ENCODE measurements at regions of chr4 and their contacts with region 1.

Region 1: DNA sequence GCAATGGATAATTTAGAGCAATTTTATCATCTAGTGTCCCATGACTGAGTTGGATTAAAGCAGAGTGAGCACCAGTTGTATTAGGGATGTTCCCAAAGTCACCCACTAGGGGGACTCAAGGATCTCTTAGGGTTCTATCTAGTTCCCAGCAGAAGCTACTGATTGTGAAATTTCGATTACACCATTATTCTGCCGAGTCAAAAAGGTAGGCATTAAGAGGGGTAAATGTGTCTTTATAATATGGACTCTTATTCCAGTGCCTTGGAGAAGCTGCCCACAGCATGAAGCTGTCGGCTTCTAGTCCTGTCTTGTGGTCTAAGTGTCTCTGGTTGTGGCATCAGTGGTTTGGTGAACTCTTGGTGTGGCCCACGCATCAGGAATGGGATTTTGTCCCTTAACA is 53.3 kb downstream of the RGS12 start:
- DNase-seq: peak; percentile 83
- H3K4me3 Mint-ChIP-seq: no peak overlapping the region
- H3K27ac Mint-ChIP-seq: no peak overlapping the region
- H3K4me1 Mint-ChIP-seq: peaks cover 8% of the 10 kb centered on the region
- H3K27me3 Mint-ChIP-seq: peaks cover 6% of the 10 kb centered on the region

Region 2: GRCh38 chr4:3442959-3443749 is 97.0 kb after region 1 on chr4:
- intact Hi-C with region 1: loop called (anchors 1 kb)
- DNase-seq: peak; percentile 92
- H3K4me3 Mint-ChIP-seq: no peak overlapping the region
- H3K27ac Mint-ChIP-seq: no peak overlapping the region
- H3K4me1 Mint-ChIP-seq: no peaks in the 10 kb centered on the region
- H3K27me3 Mint-ChIP-seq: no peaks in the 10 kb centered on the region

Region 3: GRCh38 chr4:3480528-3481112 is 134.5 kb after region 1 on chr4:
- intact Hi-C with region 1: loop called (anchors 2 kb)
- DNase-seq: peak; percentile 94
- H3K4me3 Mint-ChIP-seq: no peak overlapping the region
- H3K27ac Mint-ChIP-seq: no peak overlapping the region
- H3K4me1 Mint-ChIP-seq: no peaks in the 10 kb centered on the region
- H3K27me3 Mint-ChIP-seq: peaks cover 14% of the 10 kb centered on the region

Region 4: DNA sequence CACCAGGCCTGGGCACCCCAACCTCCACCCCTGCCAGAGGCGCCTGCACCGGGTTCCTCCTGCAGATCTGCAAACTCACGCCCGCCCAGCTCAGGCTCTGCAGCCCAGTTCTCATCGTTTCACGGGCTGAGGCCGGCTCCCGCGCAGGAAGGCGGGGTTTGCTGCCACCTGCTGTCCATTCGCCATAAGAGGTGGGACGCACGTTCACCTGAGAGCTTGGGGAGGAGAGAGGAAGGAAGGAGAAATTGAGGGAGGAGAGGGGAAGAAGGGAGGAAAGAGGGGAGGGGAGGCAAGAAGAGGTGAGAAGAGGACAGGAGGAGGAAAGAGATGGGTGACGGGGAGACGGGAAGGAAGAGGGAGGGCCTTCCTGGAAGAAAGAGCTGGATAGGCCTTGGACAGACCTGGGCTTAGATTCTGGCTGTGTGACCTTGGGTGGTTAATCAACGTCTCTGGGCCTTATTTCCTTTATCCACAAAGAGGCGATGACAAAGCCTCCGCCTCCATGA is 534.5 kb after region 1 on chr4:
- intact Hi-C with region 1: loop called (anchors 10 kb)
- DNase-seq: peak; percentile 89
- H3K4me3 Mint-ChIP-seq: no peak overlapping the region
- H3K27ac Mint-ChIP-seq: no peak overlapping the region
- H3K4me1 Mint-ChIP-seq: peaks cover 4% of the 10 kb centered on the region
- H3K27me3 Mint-ChIP-seq: peaks cover 37% of the 10 kb centered on the region

Region 5: DNA sequence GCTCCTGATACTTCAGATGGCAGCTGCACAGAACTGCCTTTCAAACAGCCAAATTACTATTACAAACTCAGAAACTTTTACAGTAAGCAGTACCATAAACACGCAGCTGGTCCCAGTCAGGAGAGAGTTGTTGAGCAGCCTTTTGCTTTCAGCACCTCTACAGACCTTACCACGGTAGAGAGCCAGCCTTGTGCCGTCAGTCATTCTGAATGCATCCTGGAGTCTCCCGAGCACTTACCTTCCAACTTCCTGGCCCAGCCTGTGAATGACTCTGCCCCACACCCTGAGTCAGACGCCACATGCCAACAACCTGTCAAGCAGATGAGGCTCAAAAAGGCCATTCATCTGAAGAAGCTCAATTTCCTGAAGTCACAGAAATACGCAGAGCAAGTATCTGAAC is 956.3 kb after region 1 on chr4:
- intact Hi-C with region 1: no loop called
- DNase-seq: no peak
- H3K4me3 Mint-ChIP-seq: no peak overlapping the region
- H3K27ac Mint-ChIP-seq: no peak overlapping the region
- H3K4me1 Mint-ChIP-seq: peaks cover 2% of the 10 kb centered on the region
- H3K27me3 Mint-ChIP-seq: no peaks in the 10 kb centered on the region

Measured in activated CD4-positive, alpha-beta T cell treated with anti-CD3 and anti-CD28 coated beads, Interleukin-2, amount 10 ng/mL, durations not matched to agents 24 days and 14 days (primary cell).